ENCODE measurements at regions of chr3 and their contacts with region 1.

Region 1: DNA sequence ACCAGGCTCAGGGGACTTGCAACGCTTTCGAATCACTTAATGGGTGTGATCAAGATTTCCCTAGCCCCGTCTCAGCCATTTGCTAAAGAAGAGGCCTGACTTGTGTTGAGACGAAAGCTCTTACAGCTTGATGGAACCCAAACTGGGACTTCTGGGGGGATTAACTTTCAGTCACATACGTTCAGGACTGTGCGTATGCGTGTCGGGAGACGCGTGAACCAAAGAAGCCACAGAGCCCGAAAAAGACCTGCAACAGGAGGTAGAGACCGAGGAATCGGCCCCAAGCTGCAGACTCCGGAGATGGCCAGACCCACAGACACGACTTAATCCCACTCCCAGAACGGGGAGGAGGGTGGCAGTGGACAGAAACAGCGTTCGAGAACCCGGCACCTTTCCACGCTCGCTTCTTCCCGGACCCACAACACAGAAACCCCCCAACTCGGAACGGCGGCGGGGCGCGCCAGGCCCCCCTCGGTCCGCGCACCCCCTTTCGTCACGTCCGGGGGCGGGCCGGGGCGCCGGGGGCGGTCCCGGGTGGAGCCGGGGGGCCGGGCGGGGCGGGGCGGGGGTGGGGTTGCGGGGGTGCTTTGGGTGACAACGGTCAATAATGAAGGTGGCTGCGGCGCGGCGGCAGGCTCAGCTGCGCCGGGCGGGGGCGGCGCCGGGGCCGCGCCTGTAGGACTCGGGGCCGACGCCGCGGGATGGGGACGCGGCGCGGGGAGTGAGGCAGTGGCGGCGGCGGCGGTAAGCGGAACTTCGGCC is at the start of gene ATP11B:
- DNase-seq: peak; percentile 75
- H3K4me3 Mint-ChIP-seq: peak within 1 kb of the TSS; percentile 97
- H3K27ac Mint-ChIP-seq: peak within 1 kb of the TSS; percentile 97
- H3K4me1 Mint-ChIP-seq: peaks cover 29% of the 10 kb centered on the region
- H3K27me3 Mint-ChIP-seq: no peaks in the 10 kb centered on the region
- total RNA-seq, gene ATP11B: 97.5 and 98.3 TPM in 2 replicates

Region 2: DNA sequence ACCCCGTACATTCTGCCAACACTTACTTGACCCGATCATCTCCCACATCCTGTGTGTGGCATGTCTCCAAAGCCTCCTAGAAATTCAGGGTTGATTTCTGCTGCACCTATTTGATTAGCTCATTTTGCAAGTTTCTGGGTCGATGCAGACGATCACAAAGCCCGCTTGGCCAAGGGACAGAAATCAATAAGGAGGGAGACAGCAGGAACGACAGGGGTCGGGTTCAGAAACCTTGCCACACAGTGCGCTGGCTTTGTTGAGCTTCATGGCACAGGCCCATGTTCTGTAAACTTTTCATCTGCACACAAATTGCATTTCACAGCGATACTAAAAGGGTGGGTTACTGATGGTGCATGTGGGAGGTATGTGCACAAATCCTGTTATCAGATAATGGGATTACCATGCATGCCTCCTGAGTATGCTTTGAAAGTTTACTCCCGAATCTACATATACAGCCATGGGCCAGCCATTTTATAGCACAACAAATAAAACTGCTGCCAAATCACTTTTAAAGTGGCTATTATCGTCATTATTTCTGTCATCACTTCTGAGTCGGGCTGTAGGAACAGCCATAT is 95.7 kb before region 1 on chr3:
- intact Hi-C with region 1: no loop called
- DNase-seq: no peak
- H3K4me3 Mint-ChIP-seq: no peak overlapping the region
- H3K27ac Mint-ChIP-seq: no peak overlapping the region
- H3K4me1 Mint-ChIP-seq: no peaks in the 10 kb centered on the region
- H3K27me3 Mint-ChIP-seq: peaks cover 21% of the 10 kb centered on the region

Region 3: GRCh38 chr3:182713743-182714517 is 79.2 kb before region 1 on chr3:
- intact Hi-C with region 1: loop called (anchors 5 kb)
- DNase-seq: no peak
- H3K4me3 Mint-ChIP-seq: no peak overlapping the region
- H3K27ac Mint-ChIP-seq: no peak overlapping the region
- H3K4me1 Mint-ChIP-seq: peaks cover 11% of the 10 kb centered on the region
- H3K27me3 Mint-ChIP-seq: no peaks in the 10 kb centered on the region

Region 4: GRCh38 chr3:182829761-182830405 is 36.8 kb after region 1 on chr3:
- intact Hi-C with region 1: loop called (anchors 5 kb)
- DNase-seq: no peak
- H3K4me3 Mint-ChIP-seq: no peak overlapping the region
- H3K27ac Mint-ChIP-seq: no peak overlapping the region
- H3K4me1 Mint-ChIP-seq: peaks cover 30% of the 10 kb centered on the region
- H3K27me3 Mint-ChIP-seq: no peaks in the 10 kb centered on the region

Region 5: DNA sequence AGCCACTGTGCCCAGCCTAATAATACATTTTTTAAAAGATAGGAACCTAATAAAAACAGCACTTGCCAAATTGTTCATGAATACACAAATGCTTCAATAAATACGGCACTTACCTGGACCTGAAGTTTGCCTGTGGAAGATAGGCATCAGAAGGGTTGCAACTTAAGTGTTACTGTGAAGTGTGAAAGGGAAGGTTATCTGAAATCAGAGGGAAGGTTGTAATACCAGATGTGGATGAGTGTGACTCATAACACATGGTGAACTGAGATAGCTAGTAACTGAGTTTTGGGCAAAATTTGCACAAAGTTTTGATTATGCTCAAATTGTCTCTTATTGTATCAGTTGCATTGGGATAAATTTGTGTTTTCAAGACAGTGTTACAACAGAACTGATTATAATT is 68.3 kb after region 1 on chr3:
- intact Hi-C with region 1: loop called (anchors 5 kb)
- DNase-seq: no peak
- H3K4me3 Mint-ChIP-seq: no peak overlapping the region
- H3K27ac Mint-ChIP-seq: no peak overlapping the region
- H3K4me1 Mint-ChIP-seq: peaks cover 22% of the 10 kb centered on the region
- H3K27me3 Mint-ChIP-seq: no peaks in the 10 kb centered on the region

Region 6: DNA sequence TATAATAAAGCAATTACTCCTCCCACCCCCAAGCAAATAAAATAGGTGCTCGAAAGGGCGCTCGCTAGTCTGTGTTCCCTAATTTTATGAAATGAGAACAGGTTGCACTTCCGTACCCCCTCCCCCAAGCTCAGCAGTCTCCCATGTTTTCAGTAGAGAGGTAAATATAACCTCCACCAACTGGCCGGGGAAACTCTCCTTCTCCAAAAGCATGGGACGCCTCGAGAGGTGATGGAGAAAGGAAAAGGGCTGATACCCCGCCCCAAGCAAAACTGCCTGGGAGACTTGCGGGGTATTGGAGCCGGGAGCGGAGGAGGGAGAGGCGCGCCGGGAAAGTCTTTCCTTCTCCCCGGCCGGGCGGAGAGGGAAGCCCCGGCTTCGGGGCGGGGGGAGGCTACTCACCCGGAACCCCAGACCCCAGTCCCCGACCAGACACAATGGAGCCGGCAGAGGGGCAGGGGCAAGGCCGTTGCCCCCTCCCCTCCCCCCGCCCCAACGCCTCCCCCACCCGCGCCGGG is 186.7 kb after region 1 on chr3:
- intact Hi-C with region 1: loop called (anchors 5 kb)
- DNase-seq: no peak
- H3K4me3 Mint-ChIP-seq: peak overlapping the region; percentile 95
- H3K27ac Mint-ChIP-seq: peak overlapping the region; percentile 82
- H3K4me1 Mint-ChIP-seq: peaks cover 33% of the 10 kb centered on the region
- H3K27me3 Mint-ChIP-seq: no peaks in the 10 kb centered on the region

Region 7: DNA sequence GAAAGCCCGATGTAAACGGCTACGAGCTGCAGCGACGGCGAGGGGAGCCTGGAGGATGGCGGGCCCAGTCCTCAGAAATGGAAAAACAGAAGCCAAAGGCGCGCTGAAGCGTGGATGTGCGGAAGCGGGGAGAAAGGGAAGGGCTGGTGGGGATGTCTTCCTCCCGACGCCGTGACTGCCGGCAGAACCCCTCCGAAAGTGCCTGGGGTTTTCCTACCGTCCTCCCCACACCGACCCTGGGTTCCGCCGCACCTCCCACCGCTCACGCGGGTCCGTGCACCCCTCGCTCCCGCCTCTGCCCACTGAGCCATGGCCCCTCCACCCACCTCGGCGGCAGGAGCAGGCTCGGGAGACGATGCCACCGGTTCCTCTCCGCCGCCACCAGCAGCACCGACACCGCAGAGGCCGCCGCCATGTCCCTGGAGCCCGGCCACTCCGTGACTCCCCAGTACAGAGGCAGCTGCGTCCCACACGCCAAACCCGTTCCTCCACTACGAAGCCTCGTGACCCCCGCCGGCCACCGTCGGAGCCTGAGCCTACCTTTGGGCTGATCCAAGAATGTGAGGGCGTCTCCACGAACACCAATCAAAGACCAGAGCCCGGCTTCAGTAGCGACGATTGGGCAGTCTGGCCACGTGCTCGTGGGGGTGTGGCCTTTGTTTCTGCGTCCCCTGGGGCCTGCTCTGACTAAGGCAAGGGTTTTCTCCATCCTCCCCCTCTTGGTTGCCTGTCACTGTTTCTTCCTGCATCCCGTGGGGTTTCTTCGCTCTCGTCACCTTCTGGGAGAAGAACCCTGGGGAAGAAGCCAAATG is 306.1 kb after region 1 on chr3 and contains the start of gene MCCC1:
- intact Hi-C with region 1: loop called (anchors 5 kb)
- DNase-seq: peak; percentile 97
- H3K4me3 Mint-ChIP-seq: peak within 1 kb of the TSS; percentile 96
- H3K27ac Mint-ChIP-seq: peak within 1 kb of the TSS; percentile 92
- H3K4me1 Mint-ChIP-seq: peaks cover 28% of the 10 kb centered on the region
- H3K27me3 Mint-ChIP-seq: no peaks in the 10 kb centered on the region
- total RNA-seq, gene MCCC1: 25.8 and 31.2 TPM in 2 replicates

Region 8: GRCh38 chr3:183435661-183436060 is 642.6 kb after region 1 on chr3:
- intact Hi-C with region 1: loop called (anchors 10 kb)
- DNase-seq: no peak
- H3K4me3 Mint-ChIP-seq: no peak overlapping the region
- H3K27ac Mint-ChIP-seq: peak overlapping the region; percentile 15
- H3K4me1 Mint-ChIP-seq: peaks cover 68% of the 10 kb centered on the region
- H3K27me3 Mint-ChIP-seq: peaks cover 4% of the 10 kb centered on the region

Measured in activated T-helper 2 cell treated with anti-CD3 and anti-CD28 coated beads, Interferon-gamma antibody, Interleukin-2, Interleukin-4, amounts not matched to agents 10 μg/mL and 5 μg/mL and 100 μg/mL, durations not matched to agents 14 hours and 24 hours and 36 hours (primary cell).